Colonic mucosa (tissue), 4 donors: ENCODE measurements at regions of chr14 and their contacts with region 1.

Region 1: GRCh38 chr14:61456720-61457119 is 135.3 kb downstream of the PRKCH start:
- DNase-seq: peak; percentile 90
- H3K4me3 ChIP-seq: no peak overlapping the region
- H3K27ac ChIP-seq: no peak overlapping the region
- H3K4me1 ChIP-seq: no peaks in the 10 kb centered on the region
- H3K27me3 ChIP-seq: no peaks in the 10 kb centered on the region
- CTCF ChIP-seq: peak; percentile 86

Region 2: GRCh38 chr14:61296719-61297502 is 159.8 kb before region 1 on chr14:
- intact Hi-C with region 1: loop called (anchors 5 kb)
- DNase-seq: no peak
- H3K4me3 ChIP-seq: no peak overlapping the region
- H3K27ac ChIP-seq: no peak overlapping the region
- H3K4me1 ChIP-seq: peaks cover 4% of the 10 kb centered on the region
- H3K27me3 ChIP-seq: no peaks in the 10 kb centered on the region
- CTCF ChIP-seq: peak; percentile 44

Region 3: GRCh38 chr14:62133776-62134550 is 677.2 kb after region 1 on chr14:
- intact Hi-C with region 1: loop called (anchors 5 kb)
- DNase-seq: no peak
- H3K4me3 ChIP-seq: no peak overlapping the region
- H3K27ac ChIP-seq: no peak overlapping the region
- H3K4me1 ChIP-seq: no peaks in the 10 kb centered on the region
- H3K27me3 ChIP-seq: no peaks in the 10 kb centered on the region
- CTCF ChIP-seq: no peak